CD14-positive monocyte (primary cell): ENCODE measurements at regions of chr9 and their contacts with region 1.

Region 1: GRCh38 chr9:1939926-1940368 is 75.2 kb upstream of the SMARCA2 start:
- DNase-seq: no peak
- H3K4me3 ChIP-seq: no peak overlapping the region
- H3K4me3 Mint-ChIP-seq: no peak overlapping the region
- H3K27ac ChIP-seq: no peak overlapping the region
- H3K27ac Mint-ChIP-seq: no peak overlapping the region
- H3K4me1 ChIP-seq: no peaks in the 10 kb centered on the region
- H3K4me1 Mint-ChIP-seq: no peaks in the 10 kb centered on the region
- H3K27me3 ChIP-seq: no peaks in the 10 kb centered on the region
- H3K27me3 Mint-ChIP-seq: peaks cover 1 to 3% (median 2%) of the 10 kb centered on the region in 3 donors
- CTCF ChIP-seq: peak; percentile 47

Region 2: GRCh38 chr9:1977026-1977425 is 37.1 kb after region 1 on chr9:
- intact Hi-C with region 1: no loop called
- DNase-seq: no peak
- H3K4me3 ChIP-seq: no peak overlapping the region
- H3K4me3 Mint-ChIP-seq: no peak overlapping the region
- H3K27ac ChIP-seq: no peak overlapping the region
- H3K27ac Mint-ChIP-seq: no peak overlapping the region
- H3K4me1 ChIP-seq: peaks cover 7 to 14% of the 10 kb centered on the region in 2 donors
- H3K4me1 Mint-ChIP-seq: peaks cover 18% of the 10 kb centered on the region
- H3K27me3 ChIP-seq: no peaks in the 10 kb centered on the region
- H3K27me3 Mint-ChIP-seq: peaks cover 0 to 3% (median 0%) of the 10 kb centered on the region in 3 donors
- CTCF ChIP-seq: no peak

Region 3: GRCh38 chr9:2087500-2088313 is 147.8 kb after region 1 on chr9:
- intact Hi-C with region 1: loop called in 1 of 2 experiments (anchors 10 kb)
- DNase-seq: peak; percentile 4 to 35 (median 25)
- H3K4me3 ChIP-seq: no peak overlapping the region
- H3K4me3 Mint-ChIP-seq: no peak overlapping the region
- H3K27ac ChIP-seq: no peak overlapping the region
- H3K27ac Mint-ChIP-seq: no peak overlapping the region
- H3K4me1 ChIP-seq: no peaks in the 10 kb centered on the region
- H3K4me1 Mint-ChIP-seq: peaks cover 5% of the 10 kb centered on the region
- H3K27me3 ChIP-seq: no peaks in the 10 kb centered on the region
- H3K27me3 Mint-ChIP-seq: no peaks in the 10 kb centered on the region
- CTCF ChIP-seq: peak; percentile 80